ENCODE measurements at regions of chr6 and their contacts with region 1.

Region 1: DNA sequence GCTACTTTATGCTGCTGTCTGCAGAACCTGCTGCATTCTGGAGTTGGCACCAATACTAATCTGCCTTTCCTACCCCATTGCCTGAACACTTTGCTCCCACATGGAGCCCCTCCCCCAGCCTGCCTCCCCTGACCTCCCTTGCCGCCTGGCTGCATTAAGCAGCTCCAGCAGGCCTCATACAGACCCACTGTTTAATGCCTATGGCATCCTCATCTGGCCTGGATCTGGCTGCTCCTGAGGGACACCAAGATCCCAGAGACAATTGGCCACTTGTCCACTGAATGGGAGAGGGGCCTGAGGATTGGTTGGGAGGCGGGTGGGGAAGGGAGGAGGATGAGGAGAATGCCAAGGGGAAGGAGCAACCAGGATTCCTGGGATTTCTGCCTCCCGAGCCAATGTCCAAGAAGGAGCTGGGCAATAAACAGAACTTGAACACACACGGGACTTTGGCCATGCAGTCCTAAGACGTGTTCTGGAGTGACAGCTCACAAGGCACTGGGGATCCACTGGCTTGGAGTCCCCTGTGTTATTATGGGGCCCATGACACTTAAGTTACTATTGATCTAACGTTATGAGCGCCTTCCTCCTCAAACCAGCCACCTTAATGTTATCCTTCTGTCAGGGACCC is 10.4 kb upstream of the KCNK5 start:
- DNase-seq: no peak
- ATAC-seq: no peak
- H3K4me3 ChIP-seq: no peak overlapping the region
- H3K27ac ChIP-seq: no peak overlapping the region
- H3K4me1 ChIP-seq: no peaks in the 10 kb centered on the region
- H3K27me3 ChIP-seq: 0 out of 2 replicates have a peak, but pooled peaks cover 3% of the 10 kb centered on the region
- CTCF ChIP-seq: no peak

Region 2: GRCh38 chr6:39189915-39190544 is 49.6 kb before region 1 on chr6:
- CTCF ChIA-PET with region 1: no interaction called
- POLR2A ChIA-PET with region 1: no interaction called
- in situ Hi-C with region 1: no loop called
- intact Hi-C with region 1: no loop called
- DNase-seq: no peak
- ATAC-seq: peak; percentile 95
- H3K4me3 ChIP-seq: no peak overlapping the region
- H3K27ac ChIP-seq: no peak overlapping the region
- H3K4me1 ChIP-seq: no peaks in the 10 kb centered on the region
- H3K27me3 ChIP-seq: no peaks in the 10 kb centered on the region
- CTCF ChIP-seq: peak; percentile 75

Region 3: GRCh38 chr6:39224011-39224410 is 15.6 kb before region 1 on chr6:
- CTCF ChIA-PET with region 1: no interaction called
- POLR2A ChIA-PET with region 1: no interaction called
- in situ Hi-C with region 1: no loop called
- intact Hi-C with region 1: no loop called
- DNase-seq: no peak
- ATAC-seq: no peak
- H3K4me3 ChIP-seq: no peak overlapping the region
- H3K27ac ChIP-seq: no peak overlapping the region
- H3K4me1 ChIP-seq: no peaks in the 10 kb centered on the region
- H3K27me3 ChIP-seq: peaks cover 9% of the 10 kb centered on the region
- CTCF ChIP-seq: no peak

Region 4: DNA sequence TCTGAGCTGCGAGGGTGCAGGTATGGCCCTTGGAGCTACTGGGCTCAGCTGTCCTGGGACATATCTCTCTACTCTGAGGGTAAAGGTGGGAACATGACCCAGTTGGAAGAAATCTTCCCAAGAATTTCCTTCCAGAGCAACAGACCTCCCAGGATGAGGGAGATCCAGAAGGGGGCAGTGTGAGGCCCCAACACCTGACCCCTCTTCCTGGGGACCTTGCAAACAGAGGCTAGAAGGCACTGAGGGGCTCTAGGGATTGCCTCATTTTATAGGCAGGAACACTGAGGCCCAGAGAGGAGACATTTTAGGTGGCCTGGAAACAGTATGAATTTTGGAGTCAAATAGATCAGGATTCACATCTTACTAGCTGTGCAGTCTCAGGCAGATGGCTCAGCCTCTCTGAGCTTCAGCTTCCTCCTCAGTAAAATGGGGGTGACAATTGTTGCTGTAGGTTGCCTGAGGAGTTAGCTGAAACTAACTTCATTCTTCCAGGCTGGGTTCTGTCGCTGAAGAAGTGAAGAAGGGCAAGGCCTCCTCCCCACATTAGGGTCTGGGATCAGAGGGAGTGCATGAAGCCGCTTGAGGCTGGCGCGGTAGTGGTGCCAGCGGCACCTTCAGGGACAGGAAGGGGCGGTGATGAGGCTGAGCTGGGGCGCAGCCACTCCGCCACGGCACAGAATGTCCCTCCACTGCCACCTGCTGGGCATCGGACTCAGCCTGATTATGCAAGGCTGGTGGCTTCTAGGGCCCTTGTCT is 63.2 kb after region 1 on chr6:
- CTCF ChIA-PET with region 1: no interaction called
- POLR2A ChIA-PET with region 1: no interaction called
- in situ Hi-C with region 1: no loop called
- intact Hi-C with region 1: loop called (anchors 10 kb)
- DNase-seq: peak; percentile 36
- ATAC-seq: peak; percentile 95
- H3K4me3 ChIP-seq: peak overlapping the region in 1 of 2 experiments; percentile 19; a peak in 1 of 4 replicates
- H3K27ac ChIP-seq: no peak overlapping the region
- H3K4me1 ChIP-seq: no peaks in the 10 kb centered on the region
- H3K27me3 ChIP-seq: peaks cover 2% of the 10 kb centered on the region; the same call in 1 of the 2 replicates
- CTCF ChIP-seq: peak; percentile 91

Measured in Panc1 (cell line).